SK-MEL-5 (cell line): ENCODE measurements at regions of chr7 and their contacts with region 1.

Region 1: DNA sequence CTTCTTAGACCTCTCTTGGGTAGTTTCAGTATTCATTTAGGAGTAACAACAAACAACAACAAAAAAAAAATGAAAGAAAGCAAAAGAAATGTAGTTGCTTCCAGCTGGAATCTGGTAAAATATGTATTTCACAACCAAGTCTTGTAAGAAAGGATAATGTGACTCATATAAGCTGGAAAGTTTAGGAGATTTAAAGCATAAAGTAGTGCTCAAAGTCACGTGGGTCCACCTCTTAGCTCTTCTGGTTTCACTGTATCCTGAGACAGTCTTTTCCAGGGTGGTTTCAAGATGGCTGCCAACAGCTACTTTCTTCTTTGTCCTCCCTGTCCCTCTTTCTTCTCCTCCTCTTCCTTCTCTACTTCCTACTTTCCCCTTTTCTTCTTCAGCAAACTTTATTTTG is 69.5 kb upstream of the CDK13 start:
- DNase-seq: no peak

Region 2: GRCh38 chr7:39987476-39988347 is 107.2 kb after region 1 on chr7:
- in situ Hi-C with region 1: loop called (anchors 25 kb)
- DNase-seq: no peak

Region 3: DNA sequence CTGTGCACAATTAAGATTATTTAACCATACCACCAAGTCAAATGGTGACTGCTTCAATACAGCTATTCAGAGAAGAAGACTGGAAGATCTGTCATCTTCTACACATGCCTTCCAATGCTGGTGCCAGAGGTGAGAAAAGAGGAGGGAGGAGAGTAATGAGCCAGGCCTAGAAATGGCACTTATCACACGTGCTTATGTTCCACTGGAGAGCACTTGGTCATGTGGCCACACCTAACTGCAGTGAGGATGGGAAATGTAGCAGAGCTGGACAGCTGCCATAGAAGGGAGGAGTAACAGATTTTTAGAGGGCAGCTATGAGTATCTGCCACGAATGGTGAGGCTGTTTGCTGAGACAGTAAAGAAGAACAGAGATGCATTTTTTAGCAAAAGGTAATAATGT is 176.7 kb after region 1 on chr7:
- in situ Hi-C with region 1: loop called (anchors 25 kb)
- DNase-seq: peak; percentile 22